ENCODE measurements at regions of chr7 and their contacts with region 1.

Region 1: GRCh38 chr7:114085592-114086501 is 167.0 kb upstream of the PPP1R3A start:
- H3K4me3 Mint-ChIP-seq: peak overlapping the region; percentile 87
- H3K27ac Mint-ChIP-seq: peak overlapping the region; percentile 58
- H3K4me1 Mint-ChIP-seq: peaks cover 54% of the 10 kb centered on the region
- H3K27me3 Mint-ChIP-seq: peaks cover 83% of the 10 kb centered on the region

Region 2: GRCh38 chr7:114051871-114052331 is 33.9 kb before region 1 on chr7:
- intact Hi-C with region 1: loop called (anchors 5 kb)
- H3K4me3 Mint-ChIP-seq: no peak overlapping the region
- H3K27ac Mint-ChIP-seq: peak overlapping the region; percentile 76
- H3K4me1 Mint-ChIP-seq: peaks cover 52% of the 10 kb centered on the region
- H3K27me3 Mint-ChIP-seq: peaks cover 14% of the 10 kb centered on the region

Region 3: DNA sequence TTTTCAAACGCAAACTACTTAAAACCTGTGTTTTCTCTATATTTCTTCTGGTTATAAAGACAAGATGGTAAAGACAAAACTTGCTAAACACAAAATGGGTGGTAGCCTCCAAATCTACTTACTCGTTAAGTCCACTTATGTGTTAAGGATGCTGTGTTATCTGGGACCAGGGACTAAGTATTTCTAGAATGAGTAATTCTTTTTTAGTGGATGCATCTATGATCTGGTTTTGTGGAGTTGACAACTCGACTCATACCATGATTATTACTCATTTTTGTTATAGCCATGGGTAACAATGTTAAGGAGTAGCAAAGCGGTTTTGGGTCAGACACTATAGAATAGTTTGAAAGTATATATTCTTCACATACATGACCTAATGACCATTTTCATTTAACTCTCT is 89.3 kb after region 1 on chr7:
- intact Hi-C with region 1: no loop called
- H3K4me3 Mint-ChIP-seq: no peak overlapping the region
- H3K27ac Mint-ChIP-seq: no peak overlapping the region
- H3K4me1 Mint-ChIP-seq: no peaks in the 10 kb centered on the region
- H3K27me3 Mint-ChIP-seq: no peaks in the 10 kb centered on the region

Region 4: GRCh38 chr7:114217026-114217425 is 131.2 kb after region 1 on chr7:
- intact Hi-C with region 1: loop called (anchors 10 kb)
- H3K4me3 Mint-ChIP-seq: no peak overlapping the region
- H3K27ac Mint-ChIP-seq: no peak overlapping the region
- H3K4me1 Mint-ChIP-seq: peaks cover 3% of the 10 kb centered on the region
- H3K27me3 Mint-ChIP-seq: no peaks in the 10 kb centered on the region